Activated naive CD4-positive, alpha-beta T cell treated with anti-CD3 and anti-CD28 coated beads, Interleukin-2, amount 10 ng/mL, durations not matched to agents 7 days and 5 days (primary cell): ENCODE measurements at regions of chr10 and their contacts with region 1.

Region 1: GRCh38 chr10:74103560-74104248 is 46.9 kb downstream of the AP3M1 start:
- DNase-seq: no peak
- H3K4me3 Mint-ChIP-seq: no peak overlapping the region
- H3K27ac Mint-ChIP-seq: no peak overlapping the region
- H3K4me1 Mint-ChIP-seq: peaks cover 6% of the 10 kb centered on the region
- H3K27me3 Mint-ChIP-seq: no peaks in the 10 kb centered on the region

Region 2: GRCh38 chr10:74075906-74076305 is 27.8 kb before region 1 on chr10:
- CTCF ChIA-PET with region 1: interaction called, 12 read pairs
- DNase-seq: no peak
- H3K4me3 Mint-ChIP-seq: no peak overlapping the region
- H3K27ac Mint-ChIP-seq: no peak overlapping the region
- H3K4me1 Mint-ChIP-seq: peaks cover 11% of the 10 kb centered on the region
- H3K27me3 Mint-ChIP-seq: no peaks in the 10 kb centered on the region